KBM-7 (cell line): ENCODE measurements at regions of chr12 and their contacts with region 1.

Region 1: GRCh38 chr12:3885277-3886094 is 12.3 kb upstream of the PARP11 start:
- DNase-seq: peak; percentile 61

Region 2: GRCh38 chr12:3727877-3728632 is 157.4 kb before region 1 on chr12:
- in situ Hi-C with region 1: no loop called
- DNase-seq: peak; percentile 6

Region 3: GRCh38 chr12:4276524-4277204 is 391.2 kb after region 1 on chr12:
- in situ Hi-C with region 1: loop called (anchors 25 kb)
- DNase-seq: peak; percentile 87